ENCODE measurements at regions of chr9 and their contacts with region 1.

Region 1: GRCh38 chr9:35771534-35771933 is 17.5 kb upstream of the MSMP start:
- DNase-seq: no peak
- H3K4me3 ChIP-seq: no peak overlapping the region
- H3K27ac ChIP-seq: no peak overlapping the region
- H3K27me3 ChIP-seq: peaks cover 21% of the 10 kb centered on the region
- CTCF ChIP-seq: no peak

Region 2: GRCh38 chr9:35732122-35732799 is 39.3 kb before region 1 on chr9 and contains the starts of genes CREB3 and TLN1:
- CTCF ChIA-PET with region 1: no interaction called
- POLR2A ChIA-PET with region 1: no interaction called
- DNase-seq: peak; percentile 98
- H3K4me3 ChIP-seq: peak within 1 kb of the TSS; percentile 98
- H3K27ac ChIP-seq: peak within 1 kb of the TSS; percentile 92
- H3K27me3 ChIP-seq: no peaks in the 10 kb centered on the region
- CTCF ChIP-seq: no peak
- polyA plus RNA-seq, gene CREB3: 51.1 and 58.1 TPM in 2 replicates
- polyA plus RNA-seq, gene TLN1: 165 and 224 TPM in 2 replicates

Region 3: GRCh38 chr9:35756275-35757225 is 15.0 kb before region 1 on chr9:
- CTCF ChIA-PET with region 1: interaction called, 10 read pairs
- POLR2A ChIA-PET with region 1: interaction called, 3 read pairs
- DNase-seq: no peak
- H3K4me3 ChIP-seq: peak overlapping the region; percentile 46
- H3K27ac ChIP-seq: no peak overlapping the region
- H3K27me3 ChIP-seq: peaks cover 3% of the 10 kb centered on the region
- CTCF ChIP-seq: peak; percentile 58